ENCODE measurements at regions of chr5 and their contacts with region 1.

Region 1: DNA sequence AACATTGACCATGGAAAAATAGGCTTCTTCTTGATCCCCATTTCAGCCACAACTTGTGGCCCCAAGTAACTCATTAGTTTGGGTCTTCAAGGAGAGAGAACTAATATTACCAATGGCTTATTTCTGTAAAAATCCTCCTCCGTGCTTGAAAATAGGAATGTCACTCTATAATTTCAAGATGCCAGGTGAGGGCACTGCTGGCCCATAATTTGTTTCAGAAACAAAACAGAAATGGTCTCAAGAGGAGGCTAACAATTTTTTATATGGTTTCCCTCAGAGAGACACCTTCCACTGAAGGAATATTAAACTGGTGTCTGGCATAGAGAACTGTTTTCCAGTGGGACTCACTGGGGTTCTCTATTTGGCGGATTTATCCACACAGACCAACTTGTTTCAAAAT is 437.0 kb upstream of the TRPC7 start:
- DNase-seq: no peak
- ATAC-seq: peak in 2 of 4 donors; percentile 26 to 55
- H3K4me3 ChIP-seq: no peak overlapping the region
- H3K27ac ChIP-seq: no peak overlapping the region
- H3K4me1 ChIP-seq: no peaks in the 10 kb centered on the region
- H3K27me3 ChIP-seq: peaks cover 0 to 3% (median 0%) of the 10 kb centered on the region in 9 donors
- CTCF ChIP-seq: peak in 9 of 12 donors; percentile 16 to 58 (median 48)
- POLR2A ChIP-seq: no peak

Region 2: DNA sequence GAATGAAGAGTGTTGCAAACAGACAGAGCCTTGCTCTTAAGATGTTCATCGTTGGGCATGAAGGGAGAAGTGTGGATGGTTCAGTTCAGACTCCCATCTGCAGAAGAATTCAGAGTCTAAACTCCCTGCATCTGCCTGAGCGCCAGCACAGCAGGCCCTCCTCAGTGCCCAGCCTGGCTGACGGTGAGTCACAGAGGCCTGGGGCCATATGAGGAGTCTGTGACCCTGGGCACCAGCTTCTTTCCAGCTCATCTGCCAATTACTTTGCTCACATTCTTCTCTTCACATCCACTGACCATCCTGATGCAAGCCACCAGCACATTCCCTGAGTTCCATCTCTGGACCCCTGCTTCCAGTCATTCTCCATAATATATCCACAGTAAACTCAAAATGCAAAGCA is 35.9 kb before region 1 on chr5:
- intact Hi-C with region 1: no loop called
- DNase-seq: no peak
- ATAC-seq: no peak
- H3K4me3 ChIP-seq: no peak overlapping the region
- H3K27ac ChIP-seq: no peak overlapping the region
- H3K4me1 ChIP-seq: no peaks in the 10 kb centered on the region
- H3K27me3 ChIP-seq: no peaks in the 10 kb centered on the region
- CTCF ChIP-seq: no peak
- POLR2A ChIP-seq: no peak

Region 3: GRCh38 chr5:137051165-137051564 is 248.8 kb after region 1 on chr5:
- intact Hi-C with region 1: loop called (anchors 2 to 10 kb)
- DNase-seq: no peak
- ATAC-seq: no peak
- H3K4me3 ChIP-seq: no peak overlapping the region
- H3K27ac ChIP-seq: no peak overlapping the region
- H3K4me1 ChIP-seq: peaks cover 0 to 8% (median 0%) of the 10 kb centered on the region in 12 donors
- H3K27me3 ChIP-seq: no peaks in the 10 kb centered on the region
- CTCF ChIP-seq: peak in 11 of 12 donors; percentile 11 to 45 (median 38)
- POLR2A ChIP-seq: no peak

Region 4: GRCh38 chr5:137220523-137220927 is 418.1 kb after region 1 on chr5:
- intact Hi-C with region 1: loop called (anchors 2 to 10 kb)
- DNase-seq: no peak
- ATAC-seq: peak; percentile 55 to 79 (median 74)
- H3K4me3 ChIP-seq: no peak overlapping the region
- H3K27ac ChIP-seq: no peak overlapping the region
- H3K4me1 ChIP-seq: peaks cover 0 to 10% (median 0%) of the 10 kb centered on the region in 12 donors
- H3K27me3 ChIP-seq: no peaks in the 10 kb centered on the region
- CTCF ChIP-seq: peak in 11 of 12 donors; percentile 25 to 59 (median 46)
- POLR2A ChIP-seq: no peak

Region 5: DNA sequence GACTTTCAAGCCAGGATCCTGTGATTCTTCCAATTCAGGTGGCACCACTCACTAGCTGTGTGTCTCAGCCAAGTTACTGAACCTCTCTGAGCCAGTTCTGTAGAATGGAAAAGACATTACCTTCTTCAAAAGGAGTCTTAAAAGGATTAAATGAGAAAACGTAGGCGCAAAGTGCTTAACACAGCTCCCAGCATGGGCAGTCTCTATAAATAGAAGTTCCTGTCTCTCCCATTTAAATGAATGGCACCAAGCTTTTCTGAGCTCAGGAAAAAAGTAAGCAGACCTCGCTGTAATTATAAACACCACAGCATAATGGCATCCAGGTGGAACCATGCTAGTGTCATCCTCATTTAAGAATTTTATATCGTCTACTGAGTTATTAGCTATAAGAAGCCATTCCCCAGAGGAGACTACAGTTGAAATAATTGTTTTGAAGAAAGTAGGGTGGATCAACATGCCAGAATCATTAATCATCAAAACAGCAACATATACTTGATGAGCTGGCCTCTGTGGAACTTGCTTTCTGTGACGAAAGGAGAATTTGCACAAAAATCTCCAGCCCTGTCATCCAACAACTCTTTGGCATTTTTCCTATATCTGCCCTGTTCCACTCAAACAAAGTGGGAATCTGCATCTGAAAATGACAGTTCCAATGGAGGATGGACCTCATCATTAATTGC is 507.8 kb after region 1 on chr5:
- intact Hi-C with region 1: loop called in 2 of 10 experiments (anchors 10 kb)
- DNase-seq: no peak
- ATAC-seq: peak in 1 of 4 donors; percentile 19
- H3K4me3 ChIP-seq: no peak overlapping the region
- H3K27ac ChIP-seq: no peak overlapping the region
- H3K4me1 ChIP-seq: peaks cover 0 to 18% (median 4%) of the 10 kb centered on the region in 12 donors
- H3K27me3 ChIP-seq: no peaks in the 10 kb centered on the region
- CTCF ChIP-seq: no peak
- POLR2A ChIP-seq: no peak

Region 6: DNA sequence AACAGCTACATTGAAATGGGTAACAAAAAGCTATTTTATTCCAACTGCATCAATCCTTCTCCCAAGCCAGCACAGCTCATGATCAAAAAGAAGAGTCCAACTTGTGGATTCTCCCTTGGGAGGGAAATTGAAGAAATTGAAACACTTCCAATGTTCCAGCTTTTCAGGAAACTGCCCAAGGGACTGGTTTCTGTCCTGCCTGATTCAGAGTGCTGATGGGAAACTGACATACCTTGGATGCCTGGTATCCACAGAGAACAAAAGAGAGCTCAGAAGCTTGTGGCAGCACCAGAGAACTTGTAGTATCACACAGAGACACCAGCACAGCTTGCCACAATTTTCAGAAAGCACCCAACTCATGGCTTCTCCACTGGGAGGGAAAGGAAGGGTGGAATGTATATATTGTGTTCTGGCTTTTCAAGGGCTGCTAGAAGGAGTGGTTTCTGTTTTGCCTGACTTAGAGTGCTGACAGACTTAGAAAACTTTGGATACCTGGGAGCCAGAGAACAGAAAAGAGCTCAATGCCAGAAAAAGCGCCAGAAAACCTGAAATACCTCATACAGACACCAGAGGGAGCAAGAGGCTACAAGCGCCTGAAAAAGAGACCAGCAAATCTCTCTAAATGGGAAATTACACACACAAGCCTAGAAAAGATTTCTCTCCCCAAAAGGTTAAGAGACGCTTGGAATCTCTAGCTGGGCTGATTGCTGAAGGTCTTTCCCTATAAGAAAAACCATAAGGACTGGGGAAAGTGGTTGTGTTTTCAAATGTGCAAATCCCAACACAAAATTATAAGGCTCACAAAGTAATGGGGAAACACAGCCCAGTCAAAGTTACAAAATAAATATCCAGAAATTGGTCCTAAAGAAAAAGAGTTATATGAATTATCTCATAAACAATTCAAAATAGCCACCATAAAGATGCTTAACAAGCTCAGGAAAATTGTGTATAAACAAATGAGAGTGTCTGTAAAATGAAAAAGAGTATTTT is 518.0 kb after region 1 on chr5:
- intact Hi-C with region 1: loop called in 3 of 10 experiments (anchors 10 kb)
- DNase-seq: no peak
- ATAC-seq: peak in 2 of 4 donors; percentile 23 to 41
- H3K4me3 ChIP-seq: no peak overlapping the region
- H3K27ac ChIP-seq: no peak overlapping the region
- H3K4me1 ChIP-seq: peaks cover 0 to 23% (median 6%) of the 10 kb centered on the region in 12 donors
- H3K27me3 ChIP-seq: peaks cover 0 to 4% (median 0%) of the 10 kb centered on the region in 9 donors
- CTCF ChIP-seq: peak; percentile 70 to 89 (median 76)
- POLR2A ChIP-seq: no peak

Region 7: DNA sequence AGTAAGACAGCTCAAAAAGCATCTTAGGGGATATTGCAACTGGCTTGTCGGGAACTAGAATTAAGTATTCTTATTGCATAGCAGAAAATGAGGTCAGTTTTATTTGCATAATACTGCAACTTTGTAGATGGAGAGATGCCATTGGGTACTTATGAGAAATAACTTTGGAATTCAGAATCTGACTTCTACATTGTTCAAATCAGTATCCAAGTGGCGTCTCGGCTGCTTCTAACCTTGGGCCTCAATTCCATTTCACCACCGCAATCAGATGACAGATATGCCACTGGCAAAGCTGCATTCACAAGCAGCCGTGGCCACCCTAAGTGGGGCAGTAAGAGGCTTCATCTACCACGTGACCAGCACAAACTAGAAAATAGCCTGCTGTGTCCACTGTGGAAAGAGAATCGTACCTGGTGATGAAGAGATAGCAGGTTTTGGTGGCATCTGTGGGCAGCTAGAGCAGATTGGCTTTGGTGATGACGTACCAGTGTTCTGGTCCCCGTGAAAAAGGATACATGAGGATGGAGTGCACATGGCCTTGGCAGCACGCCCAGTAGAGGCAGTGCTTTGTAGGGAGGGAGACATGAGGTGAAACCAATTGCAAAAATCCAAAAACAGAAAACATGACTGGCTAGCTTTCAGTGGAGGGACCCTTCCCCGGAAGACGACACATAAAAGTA is 816.9 kb after region 1 on chr5:
- intact Hi-C with region 1: loop called in 1 of 10 experiments (anchors 10 kb)
- DNase-seq: peak; percentile 76 to 88 (median 79)
- ATAC-seq: peak in 3 of 4 donors; percentile 34 to 41 (median 37)
- H3K4me3 ChIP-seq: no peak overlapping the region
- H3K27ac ChIP-seq: peak overlapping the region in 5 of 12 donors; percentile 6 to 79 (median 45)
- H3K4me1 ChIP-seq: peaks cover 3 to 55% (median 29%) of the 10 kb centered on the region in 12 donors
- H3K27me3 ChIP-seq: no peaks in the 10 kb centered on the region
- CTCF ChIP-seq: no peak
- POLR2A ChIP-seq: no peak

Measured in heart left ventricle (tissue), 16 donors.